ENCODE measurements at regions of chr2 and their contacts with region 1.

Region 1: GRCh38 chr2:74472086-74472944 is at the start of gene MRPL53:
- DNase-seq: peak; percentile 97
- ATAC-seq: peak; percentile 93
- H3K4me3 Mint-ChIP-seq: peak within 1 kb of the TSS; percentile 94
- H3K27ac Mint-ChIP-seq: peak within 1 kb of the TSS; percentile 95
- H3K4me1 Mint-ChIP-seq: peaks cover 31% of the 10 kb centered on the region
- H3K27me3 Mint-ChIP-seq: no peaks in the 10 kb centered on the region
- total RNA-seq, gene MRPL53: 93.9 to 111 TPM

Region 2: GRCh38 chr2:74226648-74227213 is 245.6 kb before region 1 on chr2:
- CTCF ChIA-PET with region 1: no interaction called
- DNase-seq: no peak
- ATAC-seq: no peak
- H3K4me3 Mint-ChIP-seq: no peak overlapping the region
- H3K27ac Mint-ChIP-seq: no peak overlapping the region
- H3K4me1 Mint-ChIP-seq: peaks cover 11% of the 10 kb centered on the region
- H3K27me3 Mint-ChIP-seq: no peaks in the 10 kb centered on the region

Region 3: GRCh38 chr2:74458132-74458925 is 14.0 kb before region 1 on chr2 and contains the start of gene WBP1:
- CTCF ChIA-PET with region 1: interaction called, 58 read pairs
- DNase-seq: peak; percentile 100
- ATAC-seq: peak; percentile 86
- H3K4me3 Mint-ChIP-seq: peak within 1 kb of the TSS; percentile 94
- H3K27ac Mint-ChIP-seq: peak within 1 kb of the TSS; percentile 95
- H3K4me1 Mint-ChIP-seq: peaks cover 51% of the 10 kb centered on the region
- H3K27me3 Mint-ChIP-seq: no peaks in the 10 kb centered on the region
- total RNA-seq, gene WBP1: 40.5 to 46.8 TPM

Measured in activated CD8-positive, alpha-beta memory T cell treated with anti-CD3 and anti-CD28 coated beads, Interleukin-2, amount 10 ng/mL, durations not matched to agents 7 days and 5 days (primary cell).